ENCODE measurements at regions of chr17 and their contacts with region 1.

Region 1: GRCh38 chr17:71633391-71633849 is 487.4 kb upstream of the SOX9 start:
- DNase-seq: peak; percentile 65 to 97
- H3K4me3 ChIP-seq: no peak overlapping the region; the same call in 1 of the 2 replicates
- H3K27ac ChIP-seq: peak overlapping the region; percentile 72
- H3K4me1 ChIP-seq: peaks cover 35% of the 10 kb centered on the region
- H3K27me3 ChIP-seq: no peaks in the 10 kb centered on the region
- CTCF ChIP-seq: no peak

Region 2: GRCh38 chr17:70987867-70988340 is 645.5 kb before region 1 on chr17:
- CTCF ChIA-PET with region 1: no interaction called
- POLR2A ChIA-PET with region 1: no interaction called
- intact Hi-C with region 1: no loop called
- DNase-seq: no peak
- H3K4me3 ChIP-seq: no peak overlapping the region
- H3K27ac ChIP-seq: no peak overlapping the region
- H3K4me1 ChIP-seq: no peaks in the 10 kb centered on the region
- H3K27me3 ChIP-seq: no peaks in the 10 kb centered on the region
- CTCF ChIP-seq: no peak

Region 3: GRCh38 chr17:71423871-71424546 is 209.4 kb before region 1 on chr17:
- CTCF ChIA-PET with region 1: no interaction called
- POLR2A ChIA-PET with region 1: no interaction called
- intact Hi-C with region 1: loop called (anchors 5 kb)
- DNase-seq: peak; percentile 59 to 98
- H3K4me3 ChIP-seq: 0 out of 2 replicates have a peak overlapping the region, but pooled peaks have one; percentile 10
- H3K27ac ChIP-seq: peak overlapping the region; percentile 96
- H3K4me1 ChIP-seq: peaks cover 24% of the 10 kb centered on the region
- H3K27me3 ChIP-seq: no peaks in the 10 kb centered on the region
- CTCF ChIP-seq: peak; percentile 30; the same call in 1 of the 2 replicates

Region 4: DNA sequence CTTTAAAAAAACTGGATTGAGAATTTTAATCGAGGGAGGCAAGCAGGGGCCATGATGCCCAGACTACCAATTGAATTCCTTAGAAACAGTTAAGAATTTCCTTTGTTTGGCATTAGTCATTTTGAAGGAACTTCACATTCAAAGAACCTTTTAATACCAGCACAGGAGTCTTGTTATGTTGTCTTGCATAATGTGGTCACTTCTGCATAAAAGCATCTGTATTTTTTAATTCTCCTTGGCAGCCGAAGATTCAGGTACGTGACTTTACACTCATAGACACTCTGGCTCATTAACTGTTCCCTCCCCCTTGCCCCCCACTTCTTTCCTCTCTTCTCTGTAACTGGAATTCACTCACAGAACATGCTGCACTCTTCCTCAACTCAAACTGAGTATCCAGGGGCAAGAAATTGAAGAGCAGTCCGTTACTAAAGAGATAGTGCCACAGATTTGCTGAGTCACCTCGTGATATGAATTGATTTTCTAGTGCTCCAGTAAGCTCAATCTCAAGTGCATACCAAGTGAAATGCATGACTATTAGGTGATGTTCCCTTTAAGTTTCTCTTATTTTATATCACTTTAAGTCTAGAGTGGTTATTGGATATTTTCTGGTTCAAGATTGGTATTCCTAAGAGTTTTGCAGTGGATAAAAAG is 84.8 kb before region 1 on chr17:
- CTCF ChIA-PET with region 1: no interaction called
- POLR2A ChIA-PET with region 1: no interaction called
- intact Hi-C with region 1: no loop called
- DNase-seq: no peak
- H3K4me3 ChIP-seq: no peak overlapping the region
- H3K27ac ChIP-seq: no peak overlapping the region
- H3K4me1 ChIP-seq: no peaks in the 10 kb centered on the region
- H3K27me3 ChIP-seq: no peaks in the 10 kb centered on the region
- CTCF ChIP-seq: no peak

Region 5: DNA sequence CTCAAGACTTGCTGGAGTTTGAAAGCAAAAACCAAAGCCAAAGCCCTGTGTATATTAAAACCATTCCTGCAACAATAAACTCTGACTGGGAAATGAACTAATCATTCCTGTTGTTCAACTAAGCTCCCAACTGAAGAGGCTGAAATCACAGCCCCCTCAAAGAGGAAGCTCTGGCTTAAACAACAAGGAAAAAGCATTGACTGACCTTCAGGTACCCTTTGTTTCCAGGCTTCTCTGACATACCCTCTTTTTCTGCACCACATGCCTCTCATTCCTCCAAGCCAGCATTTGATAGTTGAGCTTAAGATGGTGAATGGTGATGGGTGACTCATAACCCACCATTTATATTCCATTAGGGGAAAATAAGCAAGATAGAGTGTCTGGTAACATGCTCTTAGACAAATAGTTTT is 16.5 kb after region 1 on chr17:
- CTCF ChIA-PET with region 1: no interaction called
- POLR2A ChIA-PET with region 1: no interaction called
- intact Hi-C with region 1: no loop called
- DNase-seq: no peak
- H3K4me3 ChIP-seq: no peak overlapping the region
- H3K27ac ChIP-seq: no peak overlapping the region
- H3K4me1 ChIP-seq: no peaks in the 10 kb centered on the region
- H3K27me3 ChIP-seq: no peaks in the 10 kb centered on the region
- CTCF ChIP-seq: no peak

Region 6: GRCh38 chr17:71900621-71901229 is 267.3 kb after region 1 on chr17:
- CTCF ChIA-PET with region 1: no interaction called
- POLR2A ChIA-PET with region 1: no interaction called
- intact Hi-C with region 1: loop called (anchors 5 kb)
- DNase-seq: peak; percentile 65 to 93
- H3K4me3 ChIP-seq: peak overlapping the region; percentile 35; the same call in 1 of the 2 replicates
- H3K27ac ChIP-seq: peak overlapping the region; percentile 91
- H3K4me1 ChIP-seq: peaks cover 46% of the 10 kb centered on the region
- H3K27me3 ChIP-seq: no peaks in the 10 kb centered on the region
- CTCF ChIP-seq: no peak

Region 7: GRCh38 chr17:71976011-71976649 is 342.7 kb after region 1 on chr17:
- CTCF ChIA-PET with region 1: no interaction called
- POLR2A ChIA-PET with region 1: no interaction called
- intact Hi-C with region 1: loop called (anchors 2 kb)
- DNase-seq: peak; percentile 89 to 93
- H3K4me3 ChIP-seq: peak overlapping the region; percentile 32; the same call in 1 of the 2 replicates
- H3K27ac ChIP-seq: peak overlapping the region; percentile 79
- H3K4me1 ChIP-seq: peaks cover 17% of the 10 kb centered on the region
- H3K27me3 ChIP-seq: no peaks in the 10 kb centered on the region
- CTCF ChIP-seq: no peak

Region 8: DNA sequence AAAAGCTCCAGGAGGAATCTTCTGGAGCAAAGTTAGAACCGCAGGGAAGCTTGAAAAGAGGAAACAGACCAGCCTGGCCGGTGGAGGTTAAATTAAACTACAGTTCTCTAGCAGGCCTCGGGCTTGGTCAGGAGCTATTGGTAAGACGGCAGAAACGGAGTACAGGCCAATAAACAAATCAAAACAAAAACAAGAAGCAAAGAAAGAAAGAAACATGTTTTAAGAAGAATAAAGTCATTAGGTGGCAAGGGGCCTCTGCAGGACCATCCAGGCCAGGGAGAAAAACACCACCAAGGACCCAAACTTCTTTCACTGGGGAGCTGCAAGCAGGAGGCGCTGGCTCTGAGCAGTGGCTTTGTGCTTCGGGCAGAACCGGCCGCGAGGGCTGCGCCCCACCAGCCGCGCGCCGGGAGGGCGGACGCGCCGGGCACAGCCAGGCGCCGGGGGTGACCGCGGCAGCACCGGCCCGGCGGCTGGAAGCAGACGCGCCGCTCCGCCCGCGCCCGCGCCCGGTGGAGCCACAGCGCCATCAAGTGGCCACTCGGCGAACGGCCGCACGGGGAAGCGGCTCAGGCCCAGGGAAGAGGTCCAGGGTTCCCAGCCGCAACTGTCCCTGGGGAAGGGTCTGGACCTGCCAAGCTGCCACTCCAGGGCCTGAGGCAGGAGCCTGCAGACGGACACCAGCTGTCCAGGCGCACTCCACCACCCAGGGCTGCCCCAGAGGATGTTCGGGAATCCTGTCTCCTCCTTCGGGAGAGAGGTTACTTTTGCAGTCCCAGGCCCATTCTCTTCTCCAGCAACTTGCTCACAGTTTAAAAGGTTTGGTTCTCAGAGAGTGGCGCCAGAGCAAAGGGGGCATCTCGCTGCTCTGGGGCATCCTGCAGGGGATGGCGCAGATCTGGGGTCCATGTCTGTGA is 906.8 kb after region 1 on chr17:
- CTCF ChIA-PET with region 1: no interaction called
- POLR2A ChIA-PET with region 1: no interaction called
- intact Hi-C with region 1: loop called (anchors 2 kb)
- DNase-seq: peak; percentile 45 to 88
- H3K4me3 ChIP-seq: peak overlapping the region; percentile 46; the same call in 1 of the 2 replicates
- H3K27ac ChIP-seq: peak overlapping the region; percentile 68
- H3K4me1 ChIP-seq: peaks cover 16% of the 10 kb centered on the region
- H3K27me3 ChIP-seq: no peaks in the 10 kb centered on the region
- CTCF ChIP-seq: peak; percentile 75